Left cardiac atrium (tissue), 4 donors: ENCODE measurements at regions of chr10 and their contacts with region 1.

Region 1: GRCh38 chr10:125048101-125048864 is 106.4 kb downstream of the ZRANB1 start:
- DNase-seq: peak; percentile 89
- ATAC-seq: peak; percentile 93 to 95

Region 2: GRCh38 chr10:125144693-125145623 is 96.7 kb after region 1 on chr10:
- intact Hi-C with region 1: no loop called
- DNase-seq: peak; percentile 53
- ATAC-seq: peak; percentile 57 to 59

Region 3: GRCh38 chr10:125343118-125343925 is 295.0 kb after region 1 on chr10:
- intact Hi-C with region 1: loop called in 1 of 2 experiments (anchors 10 kb)
- DNase-seq: no peak
- ATAC-seq: no peak

Region 4: GRCh38 chr10:125375210-125375609 is 326.9 kb after region 1 on chr10:
- intact Hi-C with region 1: loop called (anchors 10 kb)
- DNase-seq: no peak
- ATAC-seq: peak in 1 of 2 donors; percentile 61